Activated CD4-positive, alpha-beta memory T cell treated with anti-CD3 and anti-CD28 coated beads for 36 hours (primary cell): ENCODE measurements at regions of chr2 and their contacts with region 1.

Region 1: DNA sequence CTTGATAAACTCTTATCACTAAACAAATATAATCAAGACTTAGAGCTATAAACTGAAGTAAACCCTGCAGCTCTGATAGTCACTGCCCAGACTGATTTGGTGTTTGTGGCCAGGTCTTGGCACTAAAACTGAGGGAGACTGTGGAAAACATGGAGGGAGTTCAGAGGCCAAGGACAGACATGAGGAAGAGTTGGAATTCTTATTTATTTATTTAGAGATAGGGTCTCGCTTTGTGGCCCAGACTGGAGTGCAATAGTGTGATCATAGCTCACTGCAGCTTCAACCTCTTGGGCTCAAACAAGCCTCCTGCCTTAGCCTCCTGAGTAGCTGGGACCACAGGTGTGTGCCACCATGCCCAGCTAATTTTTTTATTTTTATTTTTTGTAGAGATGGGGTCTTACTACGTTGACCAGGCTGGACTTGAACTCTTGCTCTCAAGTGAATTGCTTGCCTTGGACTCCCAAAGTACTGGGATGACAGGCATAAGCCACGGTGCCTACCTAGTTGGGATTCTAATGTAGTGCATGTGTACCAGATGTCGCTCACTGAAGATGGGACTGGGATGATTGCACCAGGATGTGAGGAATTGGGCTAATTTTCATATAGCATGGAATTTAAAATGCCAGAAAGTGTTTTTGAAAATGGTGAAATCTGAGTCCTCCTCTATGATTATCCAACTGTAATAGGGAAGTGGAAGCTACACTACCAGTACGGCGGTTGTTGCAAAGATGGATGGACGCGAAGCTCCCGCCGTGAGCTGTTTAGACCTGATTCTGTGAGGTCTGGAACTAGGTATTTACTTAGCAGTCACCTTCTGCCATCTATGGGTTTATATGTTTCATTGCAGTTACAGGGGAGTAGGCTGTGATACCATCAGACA is 52.7 kb upstream of the CTLA4 start:
- DNase-seq: peak; percentile 69
- H3K4me3 Mint-ChIP-seq: peak overlapping the region; percentile 60
- H3K27ac Mint-ChIP-seq: peak overlapping the region; percentile 58
- H3K4me1 Mint-ChIP-seq: peaks cover 56% of the 10 kb centered on the region
- H3K27me3 Mint-ChIP-seq: no peaks in the 10 kb centered on the region

Region 2: DNA sequence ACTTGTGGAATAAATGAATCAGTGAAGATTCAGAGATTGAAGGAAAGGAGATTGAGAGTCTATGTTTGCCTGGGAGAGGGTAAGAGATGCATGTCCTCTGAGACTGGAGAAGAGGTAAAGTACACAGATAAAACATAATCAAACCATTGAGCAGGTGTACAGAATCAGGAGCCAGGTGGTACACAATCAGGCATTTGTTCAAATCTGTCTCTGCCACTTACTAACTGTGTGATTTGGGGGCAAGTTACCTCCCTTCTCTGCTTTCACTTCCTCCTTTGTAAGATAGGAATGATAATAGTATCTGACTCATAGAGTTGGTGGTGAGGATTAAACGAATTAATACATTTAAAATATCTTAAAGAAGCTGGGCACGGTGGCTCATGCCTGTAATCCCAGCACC is 1914.5 kb before region 1 on chr2:
- CTCF ChIA-PET with region 1: no interaction called
- POLR2A ChIA-PET with region 1: no interaction called
- intact Hi-C with region 1: no loop called
- DNase-seq: no peak
- H3K4me3 Mint-ChIP-seq: no peak overlapping the region
- H3K27ac Mint-ChIP-seq: no peak overlapping the region
- H3K4me1 Mint-ChIP-seq: peaks cover 5% of the 10 kb centered on the region
- H3K27me3 Mint-ChIP-seq: peaks cover 21% of the 10 kb centered on the region

Region 3: GRCh38 chr2:202911512-202912341 is 903.2 kb before region 1 on chr2 and contains the starts of genes CARF and WDR12:
- CTCF ChIA-PET with region 1: no interaction called
- POLR2A ChIA-PET with region 1: no interaction called
- intact Hi-C with region 1: loop called (anchors 5 kb)
- DNase-seq: peak; percentile 94
- H3K4me3 Mint-ChIP-seq: peak within 1 kb of the TSS; percentile 98
- H3K27ac Mint-ChIP-seq: peak within 1 kb of the TSS; percentile 93
- H3K4me1 Mint-ChIP-seq: peaks cover 32% of the 10 kb centered on the region
- H3K27me3 Mint-ChIP-seq: no peaks in the 10 kb centered on the region
- total RNA-seq, gene CARF: 5.2 to 6.6 TPM
- total RNA-seq, gene WDR12: 86.1 to 97.8 TPM

Region 4: DNA sequence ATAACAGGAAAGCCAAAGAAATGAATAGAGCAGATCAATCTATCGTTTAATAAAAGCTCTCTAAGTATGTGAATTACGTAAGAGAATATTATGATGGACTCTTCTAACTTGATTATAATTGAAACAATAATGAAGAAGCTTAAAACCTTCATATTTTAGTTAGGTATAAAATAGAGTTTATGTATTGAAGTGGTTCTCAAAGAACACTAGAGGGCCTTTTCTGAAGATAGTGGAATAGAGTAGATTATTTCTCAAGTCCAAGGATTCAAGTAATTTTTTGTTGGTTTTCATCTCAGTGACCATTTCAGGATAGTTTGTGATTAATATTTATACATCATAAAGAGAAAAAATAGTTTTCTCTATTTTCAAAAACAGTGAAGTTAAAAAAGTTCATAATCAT is 702.6 kb before region 1 on chr2:
- CTCF ChIA-PET with region 1: no interaction called
- POLR2A ChIA-PET with region 1: no interaction called
- intact Hi-C with region 1: no loop called
- DNase-seq: no peak
- H3K4me3 Mint-ChIP-seq: no peak overlapping the region
- H3K27ac Mint-ChIP-seq: no peak overlapping the region
- H3K4me1 Mint-ChIP-seq: no peaks in the 10 kb centered on the region
- H3K27me3 Mint-ChIP-seq: no peaks in the 10 kb centered on the region

Region 5: DNA sequence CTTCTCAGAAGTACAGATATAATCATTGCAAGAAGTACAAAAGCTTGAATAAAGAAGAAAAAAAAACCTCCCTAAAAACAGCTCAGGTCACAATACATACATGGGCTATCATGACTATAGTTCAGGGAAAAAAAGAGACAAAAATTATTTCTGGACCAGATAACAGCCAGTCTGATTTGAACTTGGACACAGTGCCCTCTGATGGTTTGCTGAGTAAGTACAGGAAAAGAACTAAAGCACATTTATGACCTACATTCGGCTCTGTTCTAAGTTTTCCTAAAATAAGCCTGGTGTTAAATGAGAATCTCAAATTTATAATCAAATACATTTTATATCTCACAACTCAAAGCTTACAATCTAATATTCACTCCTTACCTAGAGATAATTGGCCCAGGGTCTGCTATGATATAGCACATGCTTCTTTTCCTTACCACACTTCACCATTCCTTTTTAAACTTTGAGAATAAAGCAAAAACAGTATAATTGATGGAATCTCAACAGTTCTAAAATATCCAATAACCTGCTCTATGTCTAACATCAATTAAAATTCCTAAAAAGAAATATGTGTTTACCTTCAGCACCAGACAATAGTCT is 360.9 kb before region 1 on chr2:
- CTCF ChIA-PET with region 1: interaction called, 26 read pairs
- POLR2A ChIA-PET with region 1: no interaction called
- intact Hi-C with region 1: no loop called
- DNase-seq: peak; percentile 22
- H3K4me3 Mint-ChIP-seq: no peak overlapping the region
- H3K27ac Mint-ChIP-seq: no peak overlapping the region
- H3K4me1 Mint-ChIP-seq: peaks cover 3% of the 10 kb centered on the region
- H3K27me3 Mint-ChIP-seq: no peaks in the 10 kb centered on the region

Region 6: GRCh38 chr2:203565076-203565475 is 249.8 kb before region 1 on chr2:
- CTCF ChIA-PET with region 1: no interaction called
- POLR2A ChIA-PET with region 1: no interaction called
- intact Hi-C with region 1: no loop called
- DNase-seq: no peak
- H3K4me3 Mint-ChIP-seq: no peak overlapping the region
- H3K27ac Mint-ChIP-seq: no peak overlapping the region
- H3K4me1 Mint-ChIP-seq: no peaks in the 10 kb centered on the region
- H3K27me3 Mint-ChIP-seq: no peaks in the 10 kb centered on the region

Region 7: GRCh38 chr2:203706403-203706802 is 108.5 kb before region 1 on chr2 and contains the start of gene CD28:
- CTCF ChIA-PET with region 1: interaction called, 11 read pairs
- POLR2A ChIA-PET with region 1: interaction called, 20 read pairs
- intact Hi-C with region 1: loop called (anchors 2 kb)
- DNase-seq: peak; percentile 97
- H3K4me3 Mint-ChIP-seq: peak within 1 kb of the TSS; percentile 86
- H3K27ac Mint-ChIP-seq: peak within 1 kb of the TSS; percentile 99
- H3K4me1 Mint-ChIP-seq: peaks cover 49% of the 10 kb centered on the region
- H3K27me3 Mint-ChIP-seq: no peaks in the 10 kb centered on the region
- total RNA-seq, gene CD28: 279 to 285 TPM

Region 8: GRCh38 chr2:203751685-203752271 is 63.1 kb before region 1 on chr2:
- CTCF ChIA-PET with region 1: interaction called, 10 read pairs
- POLR2A ChIA-PET with region 1: interaction called, 14 read pairs
- intact Hi-C with region 1: no loop called
- DNase-seq: no peak
- H3K4me3 Mint-ChIP-seq: no peak overlapping the region
- H3K27ac Mint-ChIP-seq: peak overlapping the region; percentile 81
- H3K4me1 Mint-ChIP-seq: peaks cover 56% of the 10 kb centered on the region
- H3K27me3 Mint-ChIP-seq: no peaks in the 10 kb centered on the region

Region 9: DNA sequence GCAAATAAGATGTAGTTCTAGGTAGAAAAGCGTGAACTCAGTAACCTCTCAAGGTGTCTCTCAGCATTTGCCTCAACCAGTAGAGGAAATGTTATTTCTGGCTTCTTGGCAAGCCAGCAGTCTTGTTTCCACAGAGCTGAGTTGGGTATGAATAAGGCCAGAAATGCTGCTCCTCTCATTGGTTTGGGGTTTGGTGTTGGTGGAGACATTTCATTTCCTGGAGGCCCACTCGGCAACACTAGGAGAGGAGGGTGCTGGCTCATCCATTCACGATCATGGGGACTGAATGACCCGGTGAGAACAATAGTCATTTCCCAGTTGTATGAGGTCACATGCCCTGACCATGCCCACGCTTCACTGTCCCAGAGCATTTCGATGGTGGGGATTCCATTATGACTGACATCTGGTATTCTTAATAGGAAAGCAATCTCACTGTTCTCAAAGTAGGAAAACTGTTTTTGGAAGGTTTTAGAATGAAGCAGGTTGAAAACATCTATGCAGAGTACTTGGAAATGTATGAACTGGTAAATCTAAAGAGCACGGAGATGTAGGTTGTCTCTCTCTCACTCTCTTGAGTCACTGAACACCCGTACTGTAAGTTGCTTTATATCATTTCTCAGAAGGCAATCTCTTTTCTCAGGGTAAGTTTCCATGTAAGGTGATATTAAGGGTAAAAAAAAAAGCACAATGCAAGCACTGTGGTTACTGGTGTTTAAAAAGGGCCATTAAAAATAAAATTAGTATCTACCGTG is 15.6 kb after region 1 on chr2:
- CTCF ChIA-PET with region 1: interaction called, 12 read pairs
- POLR2A ChIA-PET with region 1: interaction called, 7 read pairs
- intact Hi-C with region 1: loop called (anchors 1 kb)
- DNase-seq: peak; percentile 90
- H3K4me3 Mint-ChIP-seq: peak overlapping the region; percentile 58
- H3K27ac Mint-ChIP-seq: peak overlapping the region; percentile 98
- H3K4me1 Mint-ChIP-seq: peaks cover 34% of the 10 kb centered on the region
- H3K27me3 Mint-ChIP-seq: no peaks in the 10 kb centered on the region

Region 10: DNA sequence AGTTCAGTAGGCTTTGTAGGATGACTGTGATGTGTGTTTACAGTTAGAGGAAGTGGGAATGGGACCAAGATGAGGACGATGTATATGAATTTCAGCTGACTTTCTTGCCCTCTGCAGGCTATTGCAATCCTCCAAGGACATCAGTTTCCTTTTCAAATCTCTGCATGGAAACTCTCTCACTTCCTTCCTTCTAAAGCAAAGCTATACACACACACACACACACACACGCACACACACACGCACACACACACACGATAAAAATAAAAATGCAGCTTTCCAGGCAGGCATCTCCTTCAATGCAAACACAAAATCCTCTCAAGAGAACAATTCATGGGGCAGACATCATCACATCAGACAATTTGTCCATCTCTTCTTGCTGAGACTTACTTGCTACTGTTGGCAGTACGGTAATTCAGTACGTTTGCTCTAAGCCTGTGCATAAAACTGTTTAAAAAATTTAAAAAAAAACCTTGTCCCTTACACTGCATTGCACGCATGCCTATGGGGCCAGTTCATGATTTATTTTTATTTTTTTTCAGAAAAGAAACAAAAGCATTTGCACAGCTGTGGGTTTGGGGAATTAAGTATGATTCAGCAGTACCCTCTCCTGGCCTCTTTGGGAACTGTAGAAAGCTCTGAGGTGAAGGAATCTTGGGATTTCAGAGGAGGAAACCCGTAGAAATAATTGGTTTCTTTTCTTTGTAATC is 94.5 kb after region 1 on chr2:
- CTCF ChIA-PET with region 1: interaction called, 19 read pairs
- POLR2A ChIA-PET with region 1: interaction called, 9 read pairs
- intact Hi-C with region 1: loop called (anchors 2 kb)
- DNase-seq: peak; percentile 42
- H3K4me3 Mint-ChIP-seq: no peak overlapping the region
- H3K27ac Mint-ChIP-seq: peak overlapping the region; percentile 59
- H3K4me1 Mint-ChIP-seq: peaks cover 33% of the 10 kb centered on the region
- H3K27me3 Mint-ChIP-seq: peaks cover 4% of the 10 kb centered on the region